Ovary (tissue), 10 donors: ENCODE measurements at regions of chr2 and their contacts with region 1.

Region 1: GRCh38 chr2:3839476-3839875 is 136.1 kb downstream of the DCDC2C start:
- DNase-seq: no peak
- H3K4me3 ChIP-seq: no peak overlapping the region
- H3K27ac ChIP-seq: no peak overlapping the region
- H3K4me1 ChIP-seq: peaks cover 1% of the 10 kb centered on the region
- H3K27me3 ChIP-seq: no peaks in the 10 kb centered on the region
- CTCF ChIP-seq: no peak
- EP300 ChIP-seq: no peak
- POLR2A ChIP-seq: no peak

Region 2: DNA sequence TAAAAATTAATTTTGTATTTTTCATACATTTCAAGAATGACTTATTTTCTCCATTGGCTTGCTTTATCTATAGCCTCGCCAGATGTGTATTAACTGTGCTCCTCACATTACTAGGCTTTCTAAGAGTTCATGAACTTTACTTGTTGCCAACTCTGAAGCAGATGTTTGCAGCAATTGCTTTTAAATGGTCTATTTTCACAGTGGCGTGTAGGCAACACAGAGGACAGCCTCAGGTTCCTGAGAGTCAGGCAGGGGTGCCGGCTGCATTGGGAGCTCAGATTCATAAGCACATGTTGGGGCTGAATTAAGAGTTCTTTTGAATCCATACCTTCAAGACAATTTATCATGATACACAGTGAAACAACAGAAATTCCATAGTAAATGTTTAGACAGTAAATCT is 1915.9 kb before region 1 on chr2:
- intact Hi-C with region 1: loop called in 1 of 4 experiments (anchors 10 kb)
- DNase-seq: no peak
- H3K4me3 ChIP-seq: no peak overlapping the region
- H3K27ac ChIP-seq: no peak overlapping the region
- H3K4me1 ChIP-seq: no peaks in the 10 kb centered on the region
- H3K27me3 ChIP-seq: no peaks in the 10 kb centered on the region
- CTCF ChIP-seq: no peak
- EP300 ChIP-seq: no peak
- POLR2A ChIP-seq: no peak